ENCODE measurements at regions of chr6 and their contacts with region 1.

Region 1: GRCh38 chr6:2634139-2634964 is 116.4 kb downstream of the MYLK4 start:
- DNase-seq: peak; percentile 87
- H3K4me3 Mint-ChIP-seq: peak overlapping the region; percentile 67
- H3K27ac Mint-ChIP-seq: peak overlapping the region; percentile 80
- H3K4me1 Mint-ChIP-seq: peaks cover 40% of the 10 kb centered on the region
- H3K27me3 Mint-ChIP-seq: no peaks in the 10 kb centered on the region
- CTCF ChIP-seq: peak; percentile 95

Region 2: GRCh38 chr6:1596088-1596852 is 1038.1 kb before region 1 on chr6:
- CTCF ChIA-PET with region 1: interaction called, 49 read pairs
- POLR2A ChIA-PET with region 1: interaction called, 4 read pairs
- intact Hi-C with region 1: loop called (anchors 2 kb)
- DNase-seq: peak; percentile 55
- H3K4me3 Mint-ChIP-seq: no peak overlapping the region
- H3K27ac Mint-ChIP-seq: no peak overlapping the region
- H3K4me1 Mint-ChIP-seq: peaks cover 28% of the 10 kb centered on the region
- H3K27me3 Mint-ChIP-seq: peaks cover 21% of the 10 kb centered on the region
- CTCF ChIP-seq: peak; percentile 93

Region 3: GRCh38 chr6:1686117-1687098 is 947.9 kb before region 1 on chr6:
- CTCF ChIA-PET with region 1: interaction called, 3 read pairs
- POLR2A ChIA-PET with region 1: no interaction called
- intact Hi-C with region 1: loop called (anchors 2 kb)
- DNase-seq: peak; percentile 96
- H3K4me3 Mint-ChIP-seq: peak overlapping the region; percentile 47
- H3K27ac Mint-ChIP-seq: peak overlapping the region; percentile 82
- H3K4me1 Mint-ChIP-seq: peaks cover 46% of the 10 kb centered on the region
- H3K27me3 Mint-ChIP-seq: no peaks in the 10 kb centered on the region
- CTCF ChIP-seq: peak; percentile 25

Region 4: GRCh38 chr6:2209226-2209809 is 425.0 kb before region 1 on chr6:
- CTCF ChIA-PET with region 1: interaction called, 11 read pairs
- POLR2A ChIA-PET with region 1: interaction called, 3 read pairs
- intact Hi-C with region 1: loop called (anchors 1 kb)
- DNase-seq: peak; percentile 82
- H3K4me3 Mint-ChIP-seq: no peak overlapping the region
- H3K27ac Mint-ChIP-seq: no peak overlapping the region
- H3K4me1 Mint-ChIP-seq: no peaks in the 10 kb centered on the region
- H3K27me3 Mint-ChIP-seq: no peaks in the 10 kb centered on the region
- CTCF ChIP-seq: peak; percentile 62

Region 5: DNA sequence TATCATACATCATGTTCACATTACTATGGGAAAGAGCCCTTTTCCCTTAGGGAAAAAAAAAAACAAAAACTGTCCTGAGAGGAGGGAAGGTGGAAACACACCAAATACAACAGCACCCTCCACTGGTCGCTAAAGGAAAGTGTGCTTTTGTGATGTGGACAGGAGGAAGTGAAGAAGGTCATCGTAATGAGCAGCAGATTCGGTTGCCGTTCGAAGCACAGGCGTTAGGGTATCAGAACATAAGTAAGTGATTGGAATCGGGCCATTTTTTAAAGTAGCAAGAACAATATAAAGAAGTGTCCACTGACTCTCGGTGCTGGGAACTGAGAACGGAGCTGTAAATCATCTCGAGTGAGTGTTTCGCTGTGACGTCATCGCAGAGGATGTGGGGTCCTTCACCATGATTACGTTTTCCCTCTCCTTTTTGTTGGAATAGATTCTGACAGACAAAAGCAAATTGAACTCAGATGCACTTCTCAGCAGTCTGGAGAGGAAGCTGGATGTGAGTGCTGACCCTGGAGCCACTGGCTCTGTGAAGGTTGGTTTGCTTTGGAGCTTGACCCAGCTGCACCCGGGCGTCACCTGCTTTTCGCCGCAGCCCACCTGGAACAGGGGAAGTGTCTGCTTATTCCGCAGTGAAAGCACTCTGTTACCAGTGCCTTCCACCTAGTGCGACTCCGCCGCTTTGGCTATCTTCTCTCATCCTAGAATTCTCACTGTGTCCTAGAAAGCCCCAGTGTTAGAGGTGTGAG is 185.4 kb before region 1 on chr6:
- CTCF ChIA-PET with region 1: interaction called, 6 read pairs
- POLR2A ChIA-PET with region 1: no interaction called
- intact Hi-C with region 1: loop called (anchors 5 kb)
- DNase-seq: peak; percentile 82
- H3K4me3 Mint-ChIP-seq: no peak overlapping the region
- H3K27ac Mint-ChIP-seq: no peak overlapping the region
- H3K4me1 Mint-ChIP-seq: peaks cover 6% of the 10 kb centered on the region
- H3K27me3 Mint-ChIP-seq: no peaks in the 10 kb centered on the region
- CTCF ChIP-seq: peak; percentile 67

Region 6: DNA sequence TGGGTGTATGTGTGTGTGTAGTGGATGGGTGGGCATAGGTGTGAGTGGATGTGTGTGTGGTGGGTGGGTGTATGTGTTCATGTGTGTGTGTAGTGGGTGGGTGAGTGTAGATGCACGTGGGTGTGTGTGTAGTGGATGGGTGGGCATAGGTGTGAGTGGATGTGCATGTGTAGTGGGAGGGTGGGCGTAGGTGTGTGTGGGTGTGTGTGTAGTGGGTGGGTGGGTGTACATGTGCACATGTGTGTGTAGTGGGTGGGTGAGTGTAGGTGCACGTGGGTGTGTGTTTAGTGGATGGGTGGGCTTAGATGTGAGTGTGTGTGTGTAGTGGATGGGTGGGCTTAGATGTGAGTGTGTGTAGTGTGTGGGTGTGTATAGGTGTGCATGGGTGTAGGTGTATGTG is 12.0 kb after region 1 on chr6:
- CTCF ChIA-PET with region 1: interaction called, 18 read pairs
- POLR2A ChIA-PET with region 1: interaction called, 4 read pairs
- intact Hi-C with region 1: no loop called
- DNase-seq: no peak
- H3K4me3 Mint-ChIP-seq: no peak overlapping the region
- H3K27ac Mint-ChIP-seq: no peak overlapping the region
- H3K4me1 Mint-ChIP-seq: no peaks in the 10 kb centered on the region
- H3K27me3 Mint-ChIP-seq: no peaks in the 10 kb centered on the region
- CTCF ChIP-seq: no peak

Region 7: GRCh38 chr6:2911171-2911570 is 276.8 kb after region 1 on chr6:
- CTCF ChIA-PET with region 1: no interaction called
- POLR2A ChIA-PET with region 1: no interaction called
- intact Hi-C with region 1: no loop called
- DNase-seq: peak; percentile 41
- H3K4me3 Mint-ChIP-seq: no peak overlapping the region
- H3K27ac Mint-ChIP-seq: no peak overlapping the region
- H3K4me1 Mint-ChIP-seq: no peaks in the 10 kb centered on the region
- H3K27me3 Mint-ChIP-seq: no peaks in the 10 kb centered on the region
- CTCF ChIP-seq: no peak

Region 8: GRCh38 chr6:3231247-3232016 is 597.1 kb after region 1 on chr6:
- CTCF ChIA-PET with region 1: no interaction called
- POLR2A ChIA-PET with region 1: no interaction called
- intact Hi-C with region 1: no loop called
- DNase-seq: no peak
- H3K4me3 Mint-ChIP-seq: peak overlapping the region; percentile 36
- H3K27ac Mint-ChIP-seq: no peak overlapping the region
- H3K4me1 Mint-ChIP-seq: peaks cover 21% of the 10 kb centered on the region
- H3K27me3 Mint-ChIP-seq: peaks cover 70% of the 10 kb centered on the region
- CTCF ChIP-seq: no peak

Measured in MCF 10A (cell line).